Caco-2 (cell line): ENCODE measurements at regions of chr1 and their contacts with region 1.

Region 1: DNA sequence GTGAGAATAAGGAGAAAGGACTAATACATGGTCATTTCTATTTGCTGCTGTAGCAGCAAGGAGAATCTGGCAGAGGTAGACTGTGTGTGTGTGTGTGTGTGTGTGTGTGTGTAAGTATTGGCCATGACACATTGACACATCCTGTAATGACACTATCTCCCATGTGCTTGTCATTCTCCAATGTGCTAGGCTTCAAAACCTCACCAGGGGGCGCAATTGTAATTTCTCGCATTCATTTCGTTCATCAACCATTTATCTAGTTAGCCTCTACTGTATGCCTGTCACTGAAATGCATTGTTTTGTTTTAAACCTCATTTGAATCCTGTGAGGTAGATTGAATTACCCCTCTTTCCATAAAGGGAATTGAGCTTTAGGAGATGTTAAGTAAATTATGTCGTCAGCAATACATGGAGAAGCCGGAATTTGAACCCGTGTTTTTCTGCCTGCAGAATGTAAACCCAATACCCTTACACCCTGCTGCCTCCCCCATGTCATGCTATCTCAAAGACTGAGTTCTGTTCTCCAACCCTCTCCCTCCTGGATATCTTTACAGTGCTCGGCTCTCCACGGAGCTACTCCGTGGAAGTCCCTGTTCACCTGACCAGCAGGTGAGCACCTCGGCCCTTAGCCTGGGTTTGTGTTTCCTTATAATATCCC is 100.8 kb downstream of the UCK2 start:
- DNase-seq: peak; percentile 44 to 47
- H3K4me3 ChIP-seq: no peak overlapping the region
- H3K4me3 Mint-ChIP-seq: no peak overlapping the region
- H3K27ac Mint-ChIP-seq: no peak overlapping the region
- H3K4me1 ChIP-seq: no peaks in the 10 kb centered on the region
- H3K4me1 Mint-ChIP-seq: no peaks in the 10 kb centered on the region
- H3K27me3 ChIP-seq: no peaks in the 10 kb centered on the region
- H3K27me3 Mint-ChIP-seq: no peaks in the 10 kb centered on the region
- CTCF ChIP-seq: peak; percentile 53 to 63

Region 2: DNA sequence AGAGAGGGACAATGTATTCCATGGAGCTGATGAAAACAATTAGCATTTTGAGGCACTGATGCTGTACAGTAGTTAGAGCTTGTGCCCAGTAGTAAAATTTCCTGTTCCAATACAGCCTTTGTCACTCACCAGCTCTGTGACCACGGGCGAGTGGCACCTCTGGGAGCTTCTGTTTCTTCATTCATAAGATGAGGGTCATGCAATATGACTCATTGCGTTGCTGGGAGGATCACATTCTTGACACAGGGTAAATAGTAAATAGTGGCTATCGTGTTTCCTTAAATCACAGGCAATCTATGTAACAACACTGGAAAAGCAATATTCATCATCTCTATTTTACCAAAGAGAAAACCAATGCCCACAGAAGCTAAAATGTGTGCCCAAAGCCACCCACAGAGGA is 388.9 kb before region 1 on chr1:
- CTCF ChIA-PET with region 1: no interaction called
- POLR2A ChIA-PET with region 1: no interaction called
- intact Hi-C with region 1: no loop called
- DNase-seq: no peak
- H3K4me3 ChIP-seq: no peak overlapping the region
- H3K4me3 Mint-ChIP-seq: no peak overlapping the region
- H3K27ac Mint-ChIP-seq: no peak overlapping the region
- H3K4me1 ChIP-seq: no peaks in the 10 kb centered on the region
- H3K4me1 Mint-ChIP-seq: peaks cover 14% of the 10 kb centered on the region
- H3K27me3 ChIP-seq: no peaks in the 10 kb centered on the region; the same call in 1 of the 2 replicates
- H3K27me3 Mint-ChIP-seq: no peaks in the 10 kb centered on the region
- CTCF ChIP-seq: no peak

Region 3: DNA sequence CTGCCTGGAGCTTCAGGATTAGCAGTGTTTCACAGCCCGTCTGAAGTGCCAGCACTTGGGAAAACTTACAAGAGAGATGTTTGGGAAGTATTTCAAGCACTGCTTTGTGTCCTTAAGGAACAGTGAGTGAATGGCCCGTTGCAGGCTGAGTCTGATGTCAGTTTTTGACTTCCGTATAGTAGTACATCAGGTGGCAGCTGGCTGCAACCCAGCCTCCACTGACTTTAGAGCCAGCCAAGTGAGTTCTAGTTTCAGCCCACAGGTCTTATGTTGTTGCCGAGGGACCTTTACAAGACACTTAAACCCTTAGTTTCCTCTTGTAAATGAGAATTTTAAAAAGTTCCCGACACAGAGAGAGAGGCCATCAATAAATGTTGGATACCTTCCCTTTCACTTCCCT is 65.8 kb before region 1 on chr1:
- CTCF ChIA-PET with region 1: no interaction called
- POLR2A ChIA-PET with region 1: no interaction called
- intact Hi-C with region 1: no loop called
- DNase-seq: no peak
- H3K4me3 ChIP-seq: no peak overlapping the region
- H3K4me3 Mint-ChIP-seq: no peak overlapping the region
- H3K27ac Mint-ChIP-seq: no peak overlapping the region
- H3K4me1 ChIP-seq: peaks cover 22% of the 10 kb centered on the region
- H3K4me1 Mint-ChIP-seq: peaks cover 22% of the 10 kb centered on the region
- H3K27me3 ChIP-seq: no peaks in the 10 kb centered on the region
- H3K27me3 Mint-ChIP-seq: no peaks in the 10 kb centered on the region
- CTCF ChIP-seq: no peak

Region 4: DNA sequence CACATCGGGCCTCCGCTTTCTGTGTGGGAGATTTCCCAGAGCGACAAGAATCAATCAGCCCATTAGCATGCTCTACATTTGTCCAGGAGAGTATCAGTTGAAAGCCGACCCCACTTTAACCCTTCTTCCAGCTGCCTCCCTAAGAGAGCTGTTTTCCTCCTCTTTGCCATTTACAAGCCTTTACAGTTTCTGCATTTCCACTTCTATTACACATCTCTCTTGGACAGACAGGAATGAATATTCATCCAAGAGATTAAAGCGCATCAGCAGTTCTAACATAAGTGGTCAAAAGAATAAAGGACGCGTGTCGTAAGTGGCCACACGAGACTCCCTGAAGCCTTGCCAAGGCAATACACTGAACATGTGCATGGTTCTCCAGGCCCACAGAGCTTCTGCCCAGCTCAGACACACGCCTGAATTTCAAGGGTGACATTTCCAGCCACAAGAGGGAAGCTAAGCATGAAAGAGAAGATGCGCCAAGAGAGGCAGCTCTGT is 191.3 kb after region 1 on chr1:
- CTCF ChIA-PET with region 1: no interaction called
- POLR2A ChIA-PET with region 1: no interaction called
- intact Hi-C with region 1: no loop called
- DNase-seq: no peak
- H3K4me3 ChIP-seq: no peak overlapping the region
- H3K4me3 Mint-ChIP-seq: no peak overlapping the region
- H3K27ac Mint-ChIP-seq: no peak overlapping the region
- H3K4me1 ChIP-seq: no peaks in the 10 kb centered on the region
- H3K4me1 Mint-ChIP-seq: no peaks in the 10 kb centered on the region
- H3K27me3 ChIP-seq: no peaks in the 10 kb centered on the region; the same call in 1 of the 2 replicates
- H3K27me3 Mint-ChIP-seq: peaks cover 33% of the 10 kb centered on the region
- CTCF ChIP-seq: no peak

Region 5: GRCh38 chr1:166166695-166167571 is 238.7 kb after region 1 on chr1 and contains the start of gene FAM78B:
- CTCF ChIA-PET with region 1: no interaction called
- POLR2A ChIA-PET with region 1: no interaction called
- intact Hi-C with region 1: loop called (anchors 5 kb)
- DNase-seq: peak; percentile 66
- H3K4me3 ChIP-seq: peak within 1 kb of the TSS; percentile 53
- H3K4me3 Mint-ChIP-seq: peak within 1 kb of the TSS; percentile 73
- H3K27ac Mint-ChIP-seq: no peak within 1 kb of the TSS
- H3K4me1 ChIP-seq: no peaks in the 10 kb centered on the region; the same call in 1 of the 2 replicates
- H3K4me1 Mint-ChIP-seq: no peaks in the 10 kb centered on the region
- H3K27me3 ChIP-seq: no peaks in the 10 kb centered on the region
- H3K27me3 Mint-ChIP-seq: peaks cover 30% of the 10 kb centered on the region
- CTCF ChIP-seq: no peak
- total RNA-seq, gene FAM78B: 0.21 TPM in 1 of 2 replicates, not detected in the other

Region 6: GRCh38 chr1:166258017-166258416 is 329.8 kb after region 1 on chr1:
- CTCF ChIA-PET with region 1: interaction called, 3 read pairs
- POLR2A ChIA-PET with region 1: no interaction called
- intact Hi-C with region 1: loop called (anchors 2 kb)
- DNase-seq: no peak
- H3K4me3 ChIP-seq: no peak overlapping the region
- H3K4me3 Mint-ChIP-seq: no peak overlapping the region
- H3K27ac Mint-ChIP-seq: no peak overlapping the region
- H3K4me1 ChIP-seq: no peaks in the 10 kb centered on the region
- H3K4me1 Mint-ChIP-seq: no peaks in the 10 kb centered on the region
- H3K27me3 ChIP-seq: no peaks in the 10 kb centered on the region
- H3K27me3 Mint-ChIP-seq: no peaks in the 10 kb centered on the region
- CTCF ChIP-seq: no peak

Region 7: DNA sequence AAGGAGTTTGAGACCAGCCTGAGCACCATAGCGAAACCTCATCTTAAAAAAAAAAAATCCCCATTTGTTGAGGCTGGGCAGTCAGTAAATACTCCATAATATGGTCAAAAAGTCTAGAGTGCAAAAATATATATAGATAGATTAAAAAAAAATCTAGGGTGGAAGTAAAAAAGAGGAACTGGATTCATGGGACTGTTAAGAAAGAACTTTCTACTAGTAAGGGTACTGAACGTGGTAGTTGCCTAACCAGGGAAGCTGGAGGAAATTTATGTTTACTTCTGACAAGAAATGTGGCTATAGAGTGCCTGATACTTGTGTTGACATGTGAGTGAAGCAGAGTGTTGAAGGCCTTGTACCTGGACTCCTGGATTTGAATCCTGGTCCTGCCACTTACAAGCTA is 504.5 kb after region 1 on chr1:
- CTCF ChIA-PET with region 1: no interaction called
- POLR2A ChIA-PET with region 1: no interaction called
- intact Hi-C with region 1: loop called (anchors 2 kb)
- DNase-seq: no peak
- H3K4me3 ChIP-seq: no peak overlapping the region
- H3K4me3 Mint-ChIP-seq: no peak overlapping the region
- H3K27ac Mint-ChIP-seq: no peak overlapping the region
- H3K4me1 ChIP-seq: no peaks in the 10 kb centered on the region
- H3K4me1 Mint-ChIP-seq: no peaks in the 10 kb centered on the region
- H3K27me3 ChIP-seq: no peaks in the 10 kb centered on the region
- H3K27me3 Mint-ChIP-seq: no peaks in the 10 kb centered on the region
- CTCF ChIP-seq: no peak

Region 8: GRCh38 chr1:166479052-166479631 is 550.9 kb after region 1 on chr1:
- CTCF ChIA-PET with region 1: interaction called, 20 read pairs
- POLR2A ChIA-PET with region 1: no interaction called
- intact Hi-C with region 1: loop called (anchors 1 kb)
- DNase-seq: peak; percentile 46 to 52
- H3K4me3 ChIP-seq: no peak overlapping the region
- H3K4me3 Mint-ChIP-seq: no peak overlapping the region
- H3K27ac Mint-ChIP-seq: no peak overlapping the region
- H3K4me1 ChIP-seq: no peaks in the 10 kb centered on the region
- H3K4me1 Mint-ChIP-seq: no peaks in the 10 kb centered on the region
- H3K27me3 ChIP-seq: no peaks in the 10 kb centered on the region
- H3K27me3 Mint-ChIP-seq: peaks cover 3% of the 10 kb centered on the region
- CTCF ChIP-seq: peak; percentile 75 to 82